ENCODE measurements at regions of chr6 and their contacts with region 1.

Region 1: DNA sequence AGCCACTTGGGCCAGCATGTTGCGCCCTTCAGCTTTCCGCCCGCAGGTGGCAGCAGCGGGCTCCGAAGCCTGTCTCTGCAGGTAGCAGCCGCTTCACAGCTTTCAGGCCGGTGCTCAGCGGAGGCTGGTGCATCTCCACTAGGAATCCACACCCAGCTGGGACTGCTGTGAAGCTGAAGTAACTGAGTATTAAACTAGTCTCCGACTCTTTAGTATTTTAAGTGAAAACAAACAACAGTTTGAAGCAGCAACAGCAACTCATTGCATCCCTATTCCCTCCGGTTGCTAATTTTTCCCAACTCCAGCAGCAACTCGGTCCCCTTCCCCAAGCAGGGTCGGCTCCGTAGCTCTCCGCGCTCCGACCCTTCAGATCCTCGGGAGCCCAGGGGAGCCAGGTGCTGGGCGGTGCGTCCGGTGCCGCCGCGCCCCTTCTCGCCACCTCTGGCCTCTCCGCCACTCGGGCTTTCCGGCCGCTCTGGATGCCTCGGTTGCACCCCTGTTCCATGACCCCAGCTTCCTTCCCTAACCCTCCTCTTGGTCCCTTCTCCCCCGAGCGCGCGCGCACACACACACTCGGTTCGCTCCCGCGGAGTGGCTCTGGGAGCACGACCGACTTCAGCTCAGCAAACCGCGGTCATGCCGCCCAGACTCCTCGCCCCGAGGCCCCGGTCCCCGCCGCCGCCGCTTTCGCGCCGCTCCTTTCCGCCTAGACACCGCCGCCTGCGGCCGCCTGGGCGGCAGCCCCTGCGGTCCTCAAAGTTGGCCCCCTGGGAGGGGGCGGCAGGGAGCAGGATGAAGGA is 768 bp upstream of the NKAIN2 start:
- DNase-seq: peak; percentile 82
- H3K4me3 Mint-ChIP-seq: peak overlapping the region; percentile 78
- H3K27ac Mint-ChIP-seq: no peak overlapping the region
- H3K4me1 Mint-ChIP-seq: no peaks in the 10 kb centered on the region
- H3K27me3 Mint-ChIP-seq: peaks cover 16% of the 10 kb centered on the region
- CTCF ChIP-seq: peak; percentile 64

Region 2: DNA sequence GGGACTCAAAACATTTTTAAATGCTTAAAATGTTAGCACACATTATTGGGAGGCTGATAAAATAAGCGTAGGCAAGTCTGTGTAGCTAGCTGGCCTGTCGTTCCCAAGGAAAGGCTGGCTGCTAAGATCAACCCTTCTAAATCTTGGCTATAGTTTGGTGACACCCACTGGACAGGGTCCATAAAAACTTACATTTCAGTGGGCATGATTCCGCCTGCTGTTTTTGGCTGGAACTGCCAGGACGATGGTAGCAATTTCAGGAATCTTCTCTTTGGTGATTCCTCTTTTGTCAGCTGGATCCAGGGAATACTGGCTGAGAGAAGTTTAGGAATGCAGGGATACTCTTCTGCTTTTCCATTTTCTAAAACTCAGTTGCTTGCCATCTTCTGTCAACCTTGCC is 163.0 kb after region 1 on chr6:
- CTCF ChIA-PET with region 1: interaction called, 11 read pairs
- intact Hi-C with region 1: loop called (anchors 1 kb)
- DNase-seq: peak; percentile 6
- H3K4me3 Mint-ChIP-seq: no peak overlapping the region
- H3K27ac Mint-ChIP-seq: no peak overlapping the region
- H3K4me1 Mint-ChIP-seq: no peaks in the 10 kb centered on the region
- H3K27me3 Mint-ChIP-seq: no peaks in the 10 kb centered on the region
- CTCF ChIP-seq: no peak

Region 3: DNA sequence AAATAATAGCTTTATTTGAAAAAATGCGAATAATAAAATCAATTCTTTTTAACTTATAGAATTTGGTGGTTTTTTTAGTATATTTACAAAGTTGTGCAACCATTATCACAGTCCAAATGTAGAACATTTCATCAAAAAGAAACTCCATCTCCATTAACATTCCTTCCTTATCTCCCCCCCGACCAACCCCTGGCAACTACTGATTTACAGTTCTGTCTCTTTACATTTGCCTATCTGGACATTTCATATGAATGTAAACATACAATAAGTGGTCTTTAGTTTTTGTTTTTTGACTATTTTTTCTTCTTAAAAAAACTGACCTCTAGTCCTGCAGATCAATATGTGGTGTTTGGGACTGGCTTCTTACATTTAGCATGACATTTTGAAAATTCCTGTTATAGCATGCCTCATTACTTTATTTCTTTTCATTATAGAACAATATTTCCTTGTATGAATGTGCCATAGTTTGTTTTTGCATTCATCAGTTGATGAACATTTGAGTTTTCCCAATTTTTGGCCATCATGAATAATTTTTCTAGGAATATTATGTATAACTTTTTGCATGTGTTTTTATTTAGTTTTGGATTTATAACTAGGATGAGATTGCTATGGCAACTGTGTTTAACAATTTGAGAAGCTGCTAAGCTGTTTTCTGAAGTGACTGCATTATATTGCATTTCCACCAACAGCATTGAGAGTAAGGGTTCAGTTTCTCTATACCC is 345.5 kb after region 1 on chr6:
- CTCF ChIA-PET with region 1: no interaction called
- intact Hi-C with region 1: no loop called
- DNase-seq: no peak
- H3K4me3 Mint-ChIP-seq: no peak overlapping the region
- H3K27ac Mint-ChIP-seq: no peak overlapping the region
- H3K4me1 Mint-ChIP-seq: no peaks in the 10 kb centered on the region
- H3K27me3 Mint-ChIP-seq: no peaks in the 10 kb centered on the region
- CTCF ChIP-seq: no peak